Sciatic nerve (tissue), 2 donors: ENCODE measurements at regions of chr1 and their contacts with region 1.

Region 1: DNA sequence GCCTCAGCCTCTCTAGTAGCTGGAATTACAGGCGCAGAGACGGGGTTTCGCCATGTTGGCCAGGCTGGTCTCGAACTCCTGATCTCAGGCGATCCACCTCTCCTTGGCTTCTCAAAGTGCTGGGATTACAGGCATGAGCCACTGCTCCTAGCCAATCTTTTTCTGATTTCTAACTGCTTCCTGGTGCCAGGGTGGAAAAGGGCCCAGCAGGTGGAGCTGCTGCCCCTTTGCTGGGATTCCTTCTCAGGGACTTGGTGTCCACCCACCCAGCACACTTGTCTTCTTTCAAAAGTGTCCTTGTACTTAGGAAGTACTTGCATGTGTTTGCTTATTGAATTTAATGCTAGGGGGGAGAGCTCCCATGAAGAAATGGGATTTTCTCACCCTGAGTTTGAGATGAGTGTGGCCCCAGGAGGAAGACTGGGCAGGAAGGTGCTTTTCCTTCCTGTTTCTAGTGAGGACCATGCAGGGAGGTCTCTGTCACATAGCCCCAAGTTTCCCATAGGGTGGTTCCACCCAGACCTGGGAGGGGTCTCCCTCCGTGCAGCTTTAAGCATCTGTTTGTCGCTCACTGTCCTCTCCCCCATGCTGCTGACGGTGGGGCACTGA is 14.2 kb downstream of the UTP11 start:
- DNase-seq: peak; percentile 72
- ATAC-seq: no peak

Region 2: DNA sequence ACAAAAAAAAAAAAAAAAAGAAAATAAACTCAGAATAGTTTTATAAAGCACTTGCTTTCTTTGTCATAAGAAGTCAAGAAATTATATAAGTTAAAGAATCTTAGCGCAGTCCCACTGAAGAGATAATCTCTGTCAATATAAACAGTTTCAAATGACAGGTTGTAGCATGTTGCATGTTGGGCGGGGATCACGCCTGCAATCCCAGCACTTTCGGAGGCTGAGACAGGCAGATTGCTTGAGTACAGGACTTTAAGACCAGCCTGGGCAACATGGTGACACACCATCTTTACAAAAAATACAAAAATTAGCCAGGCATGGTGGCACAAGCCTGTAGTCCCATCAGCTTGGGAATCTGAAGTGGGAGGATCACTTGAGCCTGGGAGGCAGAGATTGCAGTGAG is 61.4 kb before region 1 on chr1:
- intact Hi-C with region 1: no loop called
- DNase-seq: no peak
- ATAC-seq: no peak

Region 3: GRCh38 chr1:38818175-38818976 is 791.7 kb after region 1 on chr1:
- intact Hi-C with region 1: loop called (anchors 10 kb)
- DNase-seq: peak; percentile 65
- ATAC-seq: no peak